ENCODE measurements at regions of chr7 and their contacts with region 1.

Region 1: DNA sequence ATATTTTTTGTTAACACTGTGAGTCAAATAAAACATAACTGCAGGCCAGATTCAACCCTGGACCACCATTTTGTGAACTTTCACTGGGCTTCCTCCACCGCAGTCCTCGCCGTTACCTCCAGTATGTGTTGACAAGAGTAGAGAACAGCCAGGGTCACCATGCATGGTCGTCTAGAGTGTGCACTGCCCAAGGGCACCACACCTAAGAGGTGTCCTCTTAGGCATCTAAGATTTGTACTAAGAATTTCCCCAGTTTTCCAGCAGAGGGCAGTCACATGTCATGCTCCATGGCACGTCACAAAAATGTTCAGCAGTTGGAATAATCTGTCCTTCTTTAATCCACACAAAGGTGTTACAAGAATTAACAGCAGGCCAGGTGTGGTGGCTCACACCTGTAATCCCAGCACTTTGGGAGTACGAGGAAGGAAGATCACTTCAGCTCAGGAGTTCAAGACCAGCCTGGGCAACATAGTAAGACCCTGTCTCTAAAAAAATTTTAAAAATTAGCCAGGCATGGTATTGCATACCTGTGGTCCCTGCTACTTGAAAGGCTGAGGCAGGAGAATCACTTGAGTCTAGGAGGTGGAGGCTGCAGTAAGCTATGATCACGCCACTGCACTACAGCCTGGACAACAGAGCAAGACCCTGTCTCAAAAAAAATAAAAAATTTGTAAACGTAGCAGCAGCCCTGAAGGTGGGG is 71.2 kb upstream of the FOXK1 start:
- DNase-seq: no peak
- H3K4me3 ChIP-seq: no peak overlapping the region
- H3K27ac ChIP-seq: no peak overlapping the region
- H3K4me1 ChIP-seq: peaks cover 22% of the 10 kb centered on the region
- H3K27me3 ChIP-seq: peaks cover 12% of the 10 kb centered on the region
- CTCF ChIP-seq: peak; percentile 89

Region 2: DNA sequence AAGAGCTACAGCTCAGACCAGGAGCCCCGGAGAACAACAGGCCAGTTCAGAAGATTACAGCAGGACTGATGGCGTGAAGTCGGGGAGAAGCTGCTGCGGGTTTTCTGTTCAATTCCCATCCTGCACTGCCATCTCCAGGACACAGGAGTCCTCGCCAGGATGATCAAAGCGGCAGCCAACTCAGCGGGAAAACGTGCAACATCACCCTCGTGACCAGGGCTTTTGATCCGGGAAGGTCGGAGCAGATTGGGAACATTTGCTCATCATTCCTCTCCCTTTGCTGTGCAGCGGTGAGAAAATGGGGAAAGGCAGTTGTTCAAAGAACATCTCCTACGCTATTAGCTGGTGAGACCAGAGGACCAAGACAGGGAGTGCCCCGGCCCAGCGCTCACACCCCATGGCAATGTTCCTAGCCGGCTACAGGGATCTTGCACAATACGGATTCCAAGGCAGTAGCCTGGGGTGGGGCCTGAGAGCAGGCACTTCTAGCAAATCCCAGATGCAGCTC is 20.8 kb after region 1 on chr7:
- intact Hi-C with region 1: loop called (anchors 2 kb)
- DNase-seq: peak; percentile 76
- H3K4me3 ChIP-seq: peak overlapping the region; percentile 51
- H3K27ac ChIP-seq: peak overlapping the region; percentile 56
- H3K4me1 ChIP-seq: peaks cover 14% of the 10 kb centered on the region
- H3K27me3 ChIP-seq: peaks cover 7% of the 10 kb centered on the region
- CTCF ChIP-seq: peak; percentile 79

Region 3: DNA sequence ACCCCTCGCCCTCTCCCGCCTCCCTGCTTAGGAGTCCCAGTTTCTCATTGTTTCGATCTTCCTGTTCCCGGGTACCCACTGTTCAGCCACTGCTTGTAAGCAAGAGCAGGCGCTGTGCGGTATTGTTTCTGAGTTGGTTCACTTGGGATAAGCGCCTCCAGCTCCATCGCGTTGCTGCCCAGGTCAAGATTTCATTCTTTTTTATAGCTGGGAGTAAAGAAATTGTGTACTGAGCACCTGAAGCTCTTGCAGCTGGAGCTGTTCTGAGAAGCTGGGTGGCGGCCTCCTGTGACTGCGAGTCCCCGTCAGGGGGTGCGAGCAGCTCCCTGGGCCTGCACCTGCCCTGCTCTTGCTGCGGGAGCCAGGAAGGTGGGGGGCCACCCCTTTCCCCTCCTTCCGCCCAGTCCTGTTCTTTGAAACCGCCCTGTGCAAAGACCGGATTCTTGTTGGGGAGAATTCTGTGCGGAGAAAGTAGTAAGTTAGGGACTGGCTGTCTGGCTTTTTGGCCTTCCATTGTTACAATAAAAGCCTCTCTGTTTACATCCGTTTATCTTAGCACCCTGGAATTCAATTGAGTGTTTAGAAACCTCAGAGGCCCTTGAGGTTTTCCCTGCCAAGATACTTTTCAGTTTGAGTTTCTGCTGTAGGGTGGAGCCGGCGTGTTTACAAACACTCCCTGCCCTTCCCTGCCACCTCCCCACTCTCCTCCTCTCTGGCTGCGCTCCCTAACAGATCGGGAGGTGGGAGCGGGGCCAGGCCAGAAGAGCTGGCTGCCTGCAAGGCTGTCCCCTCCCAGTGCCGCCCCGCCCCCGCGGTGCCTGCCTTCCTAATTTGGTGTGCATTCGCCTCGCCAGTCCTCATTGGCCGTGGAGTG is 133.7 kb after region 1 on chr7:
- intact Hi-C with region 1: loop called (anchors 10 kb)
- DNase-seq: peak; percentile 100
- H3K4me3 ChIP-seq: peak overlapping the region; percentile 55
- H3K27ac ChIP-seq: peak overlapping the region; percentile 94
- H3K4me1 ChIP-seq: peaks cover 72% of the 10 kb centered on the region
- H3K27me3 ChIP-seq: no peaks in the 10 kb centered on the region
- CTCF ChIP-seq: no peak

Measured in left ventricle myocardium inferior (tissue), 1 donor.